Activated T-helper 2 cell treated with anti-CD3 and anti-CD28 coated beads, Interferon-gamma antibody, Interleukin-2, Interleukin-4, amounts not matched to agents 10 μg/mL and 5 μg/mL and 100 μg/mL, durations not matched to agents 14 hours and 24 hours and 36 hours (primary cell): ENCODE measurements at regions of chr12 and their contacts with region 1.

Region 1: DNA sequence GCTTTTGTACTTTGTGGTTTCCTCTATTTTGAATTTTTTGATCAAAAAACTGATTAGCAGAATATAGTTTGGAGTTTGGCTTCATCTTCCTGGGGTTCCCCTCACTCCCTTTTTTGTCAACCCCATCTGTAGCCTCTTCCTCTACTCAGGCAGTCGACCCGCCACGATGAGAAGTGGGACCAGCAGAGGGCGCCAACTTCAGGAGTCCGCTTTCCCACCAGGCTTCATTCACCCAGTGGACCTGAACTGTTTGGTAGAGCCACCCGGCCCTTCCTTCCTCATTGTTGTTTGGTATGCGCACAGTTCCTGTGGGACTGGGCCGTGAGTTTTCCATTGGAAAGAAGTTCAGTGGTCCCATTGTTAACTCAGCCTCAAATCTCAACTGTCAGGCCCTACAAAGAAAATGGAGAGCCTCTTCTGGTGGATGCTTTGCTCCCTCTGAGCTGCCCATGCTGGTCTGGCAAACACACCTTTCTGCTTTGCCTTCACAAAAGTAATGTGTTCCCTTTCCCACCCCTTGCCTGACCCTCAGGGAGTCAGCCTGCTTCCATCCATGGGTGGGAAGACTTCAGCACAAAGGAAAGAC is 21.7 kb downstream of the TMBIM6 start:
- DNase-seq: peak; percentile 72
- H3K4me3 Mint-ChIP-seq: peak overlapping the region; percentile 49
- H3K27ac Mint-ChIP-seq: peak overlapping the region; percentile 91
- H3K4me1 Mint-ChIP-seq: peaks cover 53% of the 10 kb centered on the region
- H3K27me3 Mint-ChIP-seq: no peaks in the 10 kb centered on the region

Region 2: GRCh38 chr12:49636979-49637755 is 125.9 kb before region 1 on chr12:
- intact Hi-C with region 1: loop called (anchors 5 kb)
- DNase-seq: peak; percentile 49
- H3K4me3 Mint-ChIP-seq: no peak overlapping the region
- H3K27ac Mint-ChIP-seq: no peak overlapping the region
- H3K4me1 Mint-ChIP-seq: peaks cover 6% of the 10 kb centered on the region
- H3K27me3 Mint-ChIP-seq: no peaks in the 10 kb centered on the region

Region 3: DNA sequence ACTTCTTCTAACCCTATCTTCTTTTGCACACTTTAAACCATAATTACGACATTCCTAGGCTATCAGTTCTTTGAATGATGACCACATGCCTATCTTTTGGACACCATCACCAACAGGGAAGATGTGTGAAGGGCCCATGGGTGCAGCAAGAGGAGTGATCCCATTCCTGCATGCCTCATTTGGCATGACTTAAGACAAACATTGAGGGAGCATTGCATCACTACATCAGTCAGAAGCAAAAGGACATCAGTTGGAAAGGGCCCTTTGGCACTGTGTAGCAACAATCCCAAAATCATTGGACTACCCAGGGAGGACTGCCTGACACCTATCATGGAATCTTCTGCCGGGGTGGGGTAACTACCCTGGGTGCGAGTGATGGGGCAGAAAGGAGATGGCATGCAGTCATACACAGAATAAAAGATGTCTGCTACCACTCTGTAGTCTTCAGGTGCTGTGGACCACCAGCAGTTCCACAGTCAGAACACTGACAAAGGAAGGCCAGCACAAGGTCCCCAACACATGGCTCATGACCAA is 32.5 kb before region 1 on chr12:
- intact Hi-C with region 1: no loop called
- DNase-seq: no peak
- H3K4me3 Mint-ChIP-seq: no peak overlapping the region
- H3K27ac Mint-ChIP-seq: no peak overlapping the region
- H3K4me1 Mint-ChIP-seq: peaks cover 3% of the 10 kb centered on the region
- H3K27me3 Mint-ChIP-seq: peaks cover 17% of the 10 kb centered on the region

Region 4: DNA sequence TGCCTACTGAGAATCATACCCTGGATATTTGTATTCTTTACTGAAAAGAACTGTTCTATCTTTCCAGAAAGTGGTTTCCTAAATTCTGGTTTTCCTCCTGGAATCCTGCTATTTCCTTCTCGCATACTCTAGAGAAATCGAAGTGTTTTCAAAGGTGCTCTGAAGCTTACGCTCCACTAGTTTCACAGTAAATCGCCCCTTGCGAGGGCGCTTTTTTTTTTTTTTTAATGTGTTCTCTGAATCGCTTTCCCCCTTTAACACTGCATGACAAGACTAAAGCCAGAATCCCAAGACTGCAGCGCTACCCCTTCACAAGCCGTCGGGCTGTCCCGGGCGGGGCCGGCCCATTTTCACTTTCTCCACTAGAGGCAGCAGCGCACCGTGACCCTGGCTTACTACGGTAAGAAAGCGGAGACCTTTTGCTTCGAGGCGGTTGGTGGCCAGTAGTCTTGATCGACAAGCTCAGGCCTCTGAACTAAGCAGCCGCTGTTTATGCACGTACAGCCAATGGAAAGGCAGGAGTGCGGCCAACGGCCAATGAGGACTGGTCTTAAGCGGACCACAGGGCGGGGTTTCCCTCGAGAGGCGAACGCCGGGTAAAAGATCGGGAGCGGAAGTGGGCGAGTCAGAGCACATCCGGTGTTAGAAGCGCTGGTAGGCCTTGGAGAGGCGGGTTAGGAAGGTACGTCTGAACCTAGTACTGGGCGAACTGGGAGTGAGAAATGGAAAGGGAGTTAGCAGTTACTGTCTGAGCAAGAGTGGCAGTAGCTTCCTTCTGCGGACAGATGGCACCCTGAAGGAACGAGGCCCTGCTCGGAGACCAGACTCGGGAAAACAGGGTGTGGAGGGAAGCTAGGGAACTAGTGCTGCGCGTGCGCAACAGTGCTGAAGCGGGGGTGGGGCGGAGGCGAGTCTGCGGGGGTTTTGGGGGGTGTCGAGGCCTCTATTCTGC is 21.9 kb before region 1 on chr12 and contains the start of gene TMBIM6:
- intact Hi-C with region 1: loop called (anchors 1 kb)
- DNase-seq: peak; percentile 99
- H3K4me3 Mint-ChIP-seq: peak within 1 kb of the TSS; percentile 88
- H3K27ac Mint-ChIP-seq: peak within 1 kb of the TSS; percentile 96
- H3K4me1 Mint-ChIP-seq: peaks cover 27% of the 10 kb centered on the region
- H3K27me3 Mint-ChIP-seq: peaks cover 4% of the 10 kb centered on the region
- total RNA-seq, gene TMBIM6: 405 and 431 TPM in 2 replicates

Region 5: DNA sequence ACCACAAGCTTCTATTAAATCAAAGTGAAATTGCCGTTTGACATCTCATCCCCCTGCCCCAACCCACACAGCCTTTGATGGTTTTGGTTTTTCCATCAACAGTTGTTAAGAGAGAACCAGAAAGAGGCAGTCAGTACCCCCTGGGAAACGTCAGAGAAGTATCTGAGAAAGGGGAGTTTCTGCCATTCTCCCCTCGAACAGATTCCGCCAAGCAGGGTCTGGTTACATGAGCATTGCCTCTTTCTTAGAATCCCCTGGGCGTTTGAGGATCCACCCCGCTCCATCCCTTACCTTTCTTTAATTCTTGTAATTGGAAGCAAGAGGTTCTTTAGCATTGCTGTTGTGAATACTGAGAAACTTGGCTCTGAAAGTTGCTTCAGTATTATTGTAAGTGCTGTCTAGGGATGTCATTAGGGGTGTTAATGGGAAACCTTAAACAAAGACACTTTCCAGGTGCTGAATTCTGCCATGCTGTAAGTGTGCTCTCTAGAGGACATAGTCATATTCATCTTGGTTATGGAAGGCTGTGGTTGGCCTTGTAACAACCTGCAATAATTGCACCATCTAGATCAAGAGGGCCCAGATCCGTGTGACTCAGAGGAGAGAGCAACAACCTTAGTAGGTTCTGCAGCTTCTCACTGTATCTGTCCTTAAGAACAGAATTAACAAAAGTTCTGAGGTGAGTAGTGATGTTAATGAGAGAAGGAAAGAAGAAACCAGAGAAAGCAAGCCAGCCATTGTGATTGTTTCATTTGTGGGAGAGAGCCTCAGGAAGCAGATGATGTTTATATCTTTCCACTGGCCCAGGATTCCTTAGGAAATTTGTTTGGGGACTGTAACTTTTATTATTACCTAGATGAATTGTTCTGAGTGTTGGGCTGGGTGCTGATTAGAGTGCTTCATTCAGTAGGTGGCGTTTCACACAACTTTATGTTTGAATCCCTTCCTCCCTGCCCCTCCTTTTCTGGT is 12.8 kb before region 1 on chr12:
- intact Hi-C with region 1: loop called (anchors 1 kb)
- DNase-seq: peak; percentile 20
- H3K4me3 Mint-ChIP-seq: peak overlapping the region; percentile 52
- H3K27ac Mint-ChIP-seq: peak overlapping the region; percentile 84
- H3K4me1 Mint-ChIP-seq: peaks cover 65% of the 10 kb centered on the region
- H3K27me3 Mint-ChIP-seq: no peaks in the 10 kb centered on the region